ENCODE measurements at regions of chrX and their contacts with region 1.

Region 1: DNA sequence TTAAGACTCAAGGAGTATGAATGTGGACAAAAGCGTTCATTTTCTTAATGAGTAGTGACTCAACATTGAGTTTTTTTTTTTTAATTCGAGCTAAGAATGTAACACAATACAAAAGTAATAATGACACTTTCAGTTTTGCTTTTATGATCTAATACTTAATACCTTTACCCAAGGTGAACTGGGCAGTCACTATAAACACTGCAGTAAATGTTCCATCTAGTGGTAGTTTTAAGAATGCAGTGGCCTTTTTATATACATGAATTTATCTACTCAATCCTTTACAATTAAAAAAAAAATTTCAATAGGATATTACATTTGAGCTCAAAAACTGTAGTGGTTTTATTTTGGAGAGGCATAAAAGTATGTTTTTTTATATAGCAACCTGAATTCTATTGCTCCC is 33.9 kb downstream of the PDK3 start:
- DNase-seq: no peak
- ATAC-seq: peak; percentile 76
- H3K4me3 Mint-ChIP-seq: no peak overlapping the region
- H3K27ac Mint-ChIP-seq: peak overlapping the region; percentile 57
- H3K4me1 Mint-ChIP-seq: peaks cover 24% of the 10 kb centered on the region
- H3K27me3 Mint-ChIP-seq: no peaks in the 10 kb centered on the region

Region 2: DNA sequence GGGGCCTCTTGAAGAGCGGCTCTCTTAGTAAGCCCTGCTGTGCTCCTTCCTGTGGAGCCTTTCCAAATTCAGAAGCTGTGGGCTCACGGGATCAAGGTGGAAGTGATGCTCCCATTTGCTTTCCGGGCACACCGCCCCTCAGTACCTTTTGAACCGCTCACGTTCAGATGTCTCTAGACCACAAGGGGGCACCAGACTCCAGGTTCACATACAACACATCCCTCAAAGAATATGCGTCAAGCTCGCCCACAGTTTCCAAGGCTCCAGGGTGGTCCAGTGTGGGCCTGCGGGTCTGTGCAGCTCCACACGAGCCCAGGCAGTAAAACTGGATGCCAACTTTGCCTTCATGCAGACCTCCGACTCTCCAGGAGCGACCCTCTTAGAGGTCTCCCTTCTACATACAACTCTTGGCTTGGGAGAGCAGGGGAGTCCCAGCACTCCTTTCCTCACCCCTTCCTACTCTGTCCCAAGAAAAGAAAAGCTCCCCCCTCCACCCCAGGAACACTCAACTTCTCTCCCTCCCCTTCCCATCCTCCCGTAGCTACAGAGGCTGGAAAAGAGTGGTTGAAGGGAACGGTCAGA is 127.5 kb before region 1 on chrX:
- CTCF ChIA-PET with region 1: interaction called, 27 read pairs
- POLR2A ChIA-PET with region 1: no interaction called
- DNase-seq: peak; percentile 72
- ATAC-seq: peak; percentile 85
- H3K4me3 Mint-ChIP-seq: peak overlapping the region; percentile 42
- H3K27ac Mint-ChIP-seq: no peak overlapping the region
- H3K4me1 Mint-ChIP-seq: peaks cover 8% of the 10 kb centered on the region
- H3K27me3 Mint-ChIP-seq: peaks cover 4% of the 10 kb centered on the region

Region 3: GRCh38 chrX:24395775-24396174 is 103.2 kb before region 1 on chrX:
- CTCF ChIA-PET with region 1: interaction called, 155 read pairs
- POLR2A ChIA-PET with region 1: interaction called, 3 read pairs
- DNase-seq: peak; percentile 59
- ATAC-seq: no peak
- H3K4me3 Mint-ChIP-seq: no peak overlapping the region
- H3K27ac Mint-ChIP-seq: no peak overlapping the region
- H3K4me1 Mint-ChIP-seq: no peaks in the 10 kb centered on the region
- H3K27me3 Mint-ChIP-seq: peaks cover 8% of the 10 kb centered on the region

Region 4: DNA sequence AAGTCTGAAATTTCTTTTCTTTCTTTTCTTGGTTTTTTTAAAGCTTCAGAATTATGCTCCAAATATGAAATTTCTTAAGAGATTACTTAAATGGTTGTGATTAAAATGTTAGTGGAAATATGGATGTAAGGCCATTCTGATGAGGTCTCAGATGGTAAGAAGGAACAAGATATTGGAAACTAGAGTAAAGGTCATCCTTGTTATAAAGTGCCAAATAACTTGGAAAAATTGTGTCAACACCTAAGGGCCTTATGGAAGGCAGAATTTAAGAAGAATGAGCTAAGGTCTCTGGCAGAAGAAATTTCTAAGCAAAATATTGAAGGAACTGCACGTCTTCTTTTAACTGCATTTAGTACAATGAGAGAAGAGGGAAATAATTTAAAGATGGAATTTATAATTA is 84.0 kb before region 1 on chrX:
- CTCF ChIA-PET with region 1: interaction called, 10 read pairs
- POLR2A ChIA-PET with region 1: no interaction called
- DNase-seq: no peak
- ATAC-seq: no peak
- H3K4me3 Mint-ChIP-seq: no peak overlapping the region
- H3K27ac Mint-ChIP-seq: no peak overlapping the region
- H3K4me1 Mint-ChIP-seq: no peaks in the 10 kb centered on the region
- H3K27me3 Mint-ChIP-seq: no peaks in the 10 kb centered on the region

Region 5: GRCh38 chrX:24464836-24465531 is 34.0 kb before region 1 on chrX and contains the start of gene PDK3:
- CTCF ChIA-PET with region 1: interaction called, 19 read pairs
- POLR2A ChIA-PET with region 1: no interaction called
- DNase-seq: peak; percentile 88
- ATAC-seq: peak; percentile 96
- H3K4me3 Mint-ChIP-seq: peak within 1 kb of the TSS; percentile 76
- H3K27ac Mint-ChIP-seq: peak within 1 kb of the TSS; percentile 93
- H3K4me1 Mint-ChIP-seq: peaks cover 39% of the 10 kb centered on the region
- H3K27me3 Mint-ChIP-seq: no peaks in the 10 kb centered on the region
- total RNA-seq, gene PDK3: 30.0 to 31.5 TPM

Region 6: DNA sequence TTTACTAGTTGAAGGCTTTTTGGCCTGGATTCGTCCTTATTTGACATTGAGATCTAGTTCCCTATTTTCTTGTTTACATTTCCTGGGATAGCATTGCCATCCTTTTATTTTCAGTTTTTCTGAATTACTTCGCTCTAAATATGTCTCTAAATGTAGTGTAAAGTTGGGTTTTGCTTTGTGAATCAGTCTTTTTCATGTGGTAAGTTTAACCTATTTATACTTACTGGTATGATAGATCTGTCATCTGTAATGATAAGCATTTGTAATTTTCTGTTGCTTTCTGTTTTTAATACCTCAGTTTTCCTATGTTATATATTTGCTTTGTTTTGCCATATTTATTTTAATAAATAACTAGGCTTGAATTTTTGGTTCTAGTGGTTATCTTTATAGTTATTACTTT is 27.2 kb before region 1 on chrX:
- CTCF ChIA-PET with region 1: interaction called, 19 read pairs
- POLR2A ChIA-PET with region 1: no interaction called
- DNase-seq: no peak
- ATAC-seq: no peak
- H3K4me3 Mint-ChIP-seq: no peak overlapping the region
- H3K27ac Mint-ChIP-seq: no peak overlapping the region
- H3K4me1 Mint-ChIP-seq: peaks cover 63% of the 10 kb centered on the region
- H3K27me3 Mint-ChIP-seq: no peaks in the 10 kb centered on the region

Region 7: DNA sequence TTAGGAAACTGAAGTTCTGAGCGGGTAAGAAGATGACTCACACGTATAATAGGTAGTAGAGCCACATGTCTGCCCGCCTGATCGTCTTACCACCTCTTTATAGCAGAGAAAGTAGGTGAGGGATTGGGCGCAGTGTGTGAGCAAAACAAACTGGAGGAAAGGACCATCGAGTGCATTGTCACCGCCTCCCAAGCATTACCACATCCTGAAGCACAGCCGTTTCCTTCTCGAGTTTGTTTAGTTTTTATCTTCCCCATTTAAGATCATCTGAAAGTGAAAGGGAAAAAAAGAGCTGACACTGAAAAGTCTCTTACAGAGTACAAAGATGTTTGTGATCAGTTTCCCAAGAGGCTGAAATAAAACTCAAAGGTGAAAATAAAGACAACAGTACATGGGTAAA is 19.1 kb before region 1 on chrX:
- CTCF ChIA-PET with region 1: interaction called, 35 read pairs
- POLR2A ChIA-PET with region 1: interaction called, 7 read pairs
- DNase-seq: peak; percentile 86
- ATAC-seq: peak; percentile 96
- H3K4me3 Mint-ChIP-seq: peak overlapping the region; percentile 77
- H3K27ac Mint-ChIP-seq: peak overlapping the region; percentile 93
- H3K4me1 Mint-ChIP-seq: peaks cover 68% of the 10 kb centered on the region
- H3K27me3 Mint-ChIP-seq: no peaks in the 10 kb centered on the region